K562 (cell line): ENCODE measurements at regions of chr11 and their contacts with region 1.

Region 1: DNA sequence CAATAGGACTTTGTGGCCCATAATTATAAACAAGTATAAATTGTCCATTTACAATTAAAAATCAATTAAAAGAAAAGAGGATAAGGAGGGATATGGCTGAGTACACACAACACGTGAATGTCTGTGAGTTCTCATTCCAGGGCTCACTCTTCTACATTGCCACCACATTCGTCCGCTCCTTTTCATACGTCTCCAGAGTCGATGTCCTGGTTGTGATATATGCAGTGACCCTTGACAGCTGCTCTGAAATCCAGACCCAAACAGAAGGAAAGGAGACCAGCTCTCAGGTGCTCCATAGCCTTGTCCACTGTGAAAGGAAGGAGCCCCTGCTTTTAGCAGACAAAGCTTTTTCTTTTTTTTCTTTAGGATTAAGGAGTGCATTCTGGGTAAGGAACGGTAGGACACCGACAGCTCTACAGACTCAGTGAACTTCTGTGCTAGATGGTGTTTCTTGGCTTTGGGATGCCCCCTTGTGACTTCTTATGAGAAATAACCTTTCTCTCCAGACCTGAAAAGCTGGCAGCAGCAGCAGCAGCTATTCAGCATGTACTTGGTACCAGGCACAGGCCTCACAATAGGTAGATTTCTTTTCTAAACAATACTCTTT is 19.7 kb upstream of the DNAJB13 start:
- DNase-seq: peak; percentile 41 to 75 (median 58)
- ATAC-seq: peak; percentile 100
- H3K4me3 ChIP-seq: no peak overlapping the region
- H3K27ac ChIP-seq: no peak overlapping the region
- H3K4me1 ChIP-seq: no peaks in the 10 kb centered on the region
- H3K27me3 ChIP-seq: no peaks in the 10 kb centered on the region
- CTCF ChIP-seq: peak; percentile 69 to 82 (median 80)
- EP300 ChIP-seq: no peak
- POLR2A ChIP-seq: no peak
- RAD21 ChIP-seq: peak; percentile 51 to 84; a peak in 3 of 4 replicates

Region 2: GRCh38 chr11:72935700-72936099 is 995.4 kb before region 1 on chr11:
- CTCF ChIA-PET with region 1: no interaction called
- POLR2A ChIA-PET with region 1: no interaction called
- in situ Hi-C with region 1: no loop called
- intact Hi-C with region 1: no loop called
- DNase-seq: no peak
- ATAC-seq: no peak
- H3K4me3 ChIP-seq: no peak overlapping the region
- H3K27ac ChIP-seq: no peak overlapping the region
- H3K4me1 ChIP-seq: no peaks in the 10 kb centered on the region
- H3K27me3 ChIP-seq: no peaks in the 10 kb centered on the region
- CTCF ChIP-seq: no peak
- EP300 ChIP-seq: no peak
- POLR2A ChIP-seq: no peak
- RAD21 ChIP-seq: no peak

Region 3: DNA sequence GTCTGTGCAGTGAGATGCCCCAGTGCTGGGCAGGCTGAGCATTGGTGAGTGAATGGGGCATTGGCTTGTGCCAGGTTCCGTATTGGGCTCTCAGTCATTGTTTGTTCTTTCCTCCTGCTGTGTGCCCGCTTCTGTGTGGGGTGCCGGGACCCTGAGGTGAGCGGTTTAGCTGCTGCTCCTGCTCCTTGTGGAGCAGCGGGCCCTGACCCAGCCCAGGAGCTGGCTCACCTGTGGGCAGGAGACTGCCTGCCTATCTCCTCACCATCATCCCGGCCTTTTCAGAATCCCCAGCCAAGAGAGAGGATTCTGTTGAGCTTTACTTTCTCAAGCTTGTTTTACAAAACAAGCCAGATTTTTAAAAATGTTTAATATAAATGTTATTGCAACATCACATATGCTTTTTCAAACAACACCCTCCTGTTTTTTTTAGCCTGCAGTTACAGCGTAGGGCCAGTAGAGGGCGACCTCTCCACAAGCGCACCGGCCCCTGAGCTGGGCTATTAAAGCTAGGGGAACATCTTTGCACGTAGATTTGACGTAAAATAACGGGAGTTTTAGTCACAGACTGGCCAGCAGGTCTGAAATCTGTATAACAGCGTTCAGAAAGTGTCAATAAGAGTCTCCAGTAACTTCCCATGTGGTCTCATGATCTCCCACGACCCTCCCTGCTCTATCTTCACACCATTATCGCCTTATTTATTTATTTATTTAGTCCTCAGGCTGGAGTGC is 580.1 kb before region 1 on chr11:
- CTCF ChIA-PET with region 1: no interaction called
- POLR2A ChIA-PET with region 1: no interaction called
- in situ Hi-C with region 1: no loop called
- intact Hi-C with region 1: loop called (anchors 5 kb)
- DNase-seq: peak; percentile 71 to 88 (median 86)
- ATAC-seq: peak; percentile 82
- H3K4me3 ChIP-seq: no peak overlapping the region
- H3K27ac ChIP-seq: no peak overlapping the region
- H3K4me1 ChIP-seq: peaks cover 3 to 11% of the 10 kb centered on the region in 2 experiments; a peak in 2 of 5 replicates
- H3K27me3 ChIP-seq: peaks cover 16 to 46% of the 10 kb centered on the region in 2 experiments
- CTCF ChIP-seq: peak; percentile 91 to 98 (median 98)
- EP300 ChIP-seq: no peak
- POLR2A ChIP-seq: no peak
- RAD21 ChIP-seq: peak; percentile 86 to 89

Region 4: DNA sequence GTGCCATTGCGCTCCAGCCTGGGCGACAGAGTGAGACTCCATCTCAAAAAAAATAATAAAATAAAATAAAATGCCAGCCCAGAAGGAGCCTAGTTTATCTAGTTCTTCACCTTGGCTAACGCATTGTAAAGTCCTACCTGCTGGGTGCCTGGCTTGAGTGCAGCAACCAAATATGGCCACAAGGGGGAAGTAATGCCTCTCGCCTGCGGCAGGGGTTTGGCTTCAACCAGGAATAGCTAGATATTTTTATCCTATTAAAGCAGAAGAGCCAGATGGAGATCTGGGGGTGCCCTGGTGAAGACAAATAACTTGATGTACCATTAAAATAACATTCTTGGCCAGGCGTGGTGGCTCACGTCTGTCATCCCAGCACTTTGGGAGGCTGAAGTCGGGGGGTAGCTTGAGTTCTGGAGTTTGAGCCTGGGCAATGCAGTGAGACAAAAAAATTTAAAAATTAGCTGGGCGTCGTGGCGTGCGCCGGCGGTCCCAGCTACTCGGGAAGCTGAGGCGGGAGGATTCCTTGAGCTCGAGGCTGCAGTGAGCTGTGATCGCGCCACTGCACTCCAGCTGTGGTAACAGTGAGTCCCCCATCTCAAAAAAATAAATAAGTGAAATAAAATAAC is 305.3 kb before region 1 on chr11:
- CTCF ChIA-PET with region 1: interaction called, 22 read pairs
- POLR2A ChIA-PET with region 1: interaction called, 4 read pairs
- in situ Hi-C with region 1: no loop called
- intact Hi-C with region 1: loop called (anchors 1 kb)
- DNase-seq: peak; percentile 80 to 83 (median 82)
- ATAC-seq: peak; percentile 94
- H3K4me3 ChIP-seq: no peak overlapping the region
- H3K27ac ChIP-seq: no peak overlapping the region
- H3K4me1 ChIP-seq: peaks cover 0 to 5% of the 10 kb centered on the region in 2 experiments; a peak in 2 of 5 replicates
- H3K27me3 ChIP-seq: peaks cover 5% of the 10 kb centered on the region in 2 experiments; a peak in 3 of 5 replicates
- CTCF ChIP-seq: peak; percentile 85 to 95 (median 91)
- EP300 ChIP-seq: no peak
- POLR2A ChIP-seq: no peak
- RAD21 ChIP-seq: peak; percentile 61 to 90

Region 5: GRCh38 chr11:73787643-73788537 is 143.3 kb before region 1 on chr11 and contains the start of gene MRPL48:
- CTCF ChIA-PET with region 1: no interaction called
- POLR2A ChIA-PET with region 1: no interaction called
- in situ Hi-C with region 1: no loop called
- intact Hi-C with region 1: loop called (anchors 10 kb)
- DNase-seq: peak; percentile 93 to 96 (median 94)
- ATAC-seq: peak; percentile 93
- H3K4me3 ChIP-seq: peak within 1 kb of the TSS; percentile 63
- H3K27ac ChIP-seq: peak within 1 kb of the TSS; percentile 95
- H3K4me1 ChIP-seq: peaks cover 16 to 38% of the 10 kb centered on the region in 2 experiments
- H3K27me3 ChIP-seq: no peaks in the 10 kb centered on the region
- CTCF ChIP-seq: no peak
- EP300 ChIP-seq: peak; percentile 5
- POLR2A ChIP-seq: peak; percentile 96
- RAD21 ChIP-seq: peak in 1 of 2 experiments; percentile 12; a peak in 1 of 4 replicates
- polyA plus RNA-seq, gene MRPL48: 216 to 237 TPM